Endothelial cell of umbilical vein (primary cell): ENCODE measurements at regions of chr1 and their contacts with region 1.

Region 1: DNA sequence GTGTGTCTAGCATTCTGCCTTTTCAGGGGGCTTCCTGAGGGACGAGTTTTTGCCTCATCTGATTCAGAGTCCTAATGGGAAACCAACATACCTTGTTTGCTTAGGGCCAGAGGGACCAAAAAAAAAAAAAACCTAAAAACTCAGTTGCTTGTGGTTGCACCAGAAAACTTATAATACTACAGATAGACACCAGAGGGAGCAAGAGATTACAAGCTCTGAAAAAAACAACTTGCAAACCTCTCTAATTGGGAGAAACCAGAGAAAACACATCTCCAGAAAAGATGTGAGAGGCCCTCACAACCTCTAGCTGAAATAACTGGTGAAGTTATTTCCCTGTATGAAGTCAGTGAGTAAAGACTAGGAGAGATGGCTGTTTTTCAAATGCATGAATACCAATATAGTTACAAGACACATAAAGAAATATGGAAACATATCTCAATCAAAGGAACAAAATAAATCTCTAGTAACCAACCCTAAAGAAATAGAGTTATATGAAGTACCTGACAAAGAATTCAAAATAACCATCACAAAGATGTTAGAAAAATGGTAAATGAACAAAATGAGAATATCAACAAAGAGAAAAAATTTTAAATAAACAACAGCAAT is 233.7 kb upstream of the NFIA start:
- DNase-seq: peak; percentile 79
- H3K4me3 ChIP-seq: no peak overlapping the region
- H3K27ac ChIP-seq: no peak overlapping the region
- H3K4me1 ChIP-seq: no peaks in the 10 kb centered on the region
- H3K27me3 ChIP-seq: no peaks in the 10 kb centered on the region
- CTCF ChIP-seq: peak; percentile 35 to 45
- POLR2A ChIP-seq: no peak

Region 2: GRCh38 chr1:59971464-59971911 is 877.2 kb before region 1 on chr1:
- CTCF ChIA-PET with region 1: interaction called, 18 read pairs
- POLR2A ChIA-PET with region 1: no interaction called
- dilution Hi-C with region 1: no loop called
- intact Hi-C with region 1: loop called (anchors 2 kb)
- DNase-seq: peak; percentile 63
- H3K4me3 ChIP-seq: no peak overlapping the region
- H3K27ac ChIP-seq: no peak overlapping the region
- H3K4me1 ChIP-seq: peaks cover 2% of the 10 kb centered on the region
- H3K27me3 ChIP-seq: peaks cover 0 to 11% of the 10 kb centered on the region in 2 experiments
- CTCF ChIP-seq: peak; percentile 83 to 91
- POLR2A ChIP-seq: no peak

Region 3: GRCh38 chr1:60153961-60154360 is 694.7 kb before region 1 on chr1:
- CTCF ChIA-PET with region 1: interaction called, 4 read pairs
- POLR2A ChIA-PET with region 1: no interaction called
- dilution Hi-C with region 1: no loop called
- intact Hi-C with region 1: loop called (anchors 2 kb)
- DNase-seq: no peak
- H3K4me3 ChIP-seq: no peak overlapping the region
- H3K27ac ChIP-seq: no peak overlapping the region
- H3K4me1 ChIP-seq: no peaks in the 10 kb centered on the region
- H3K27me3 ChIP-seq: no peaks in the 10 kb centered on the region
- CTCF ChIP-seq: no peak
- POLR2A ChIP-seq: no peak

Region 4: GRCh38 chr1:60911966-60912697 is 63.4 kb after region 1 on chr1:
- CTCF ChIA-PET with region 1: interaction called, 13 read pairs
- POLR2A ChIA-PET with region 1: no interaction called
- dilution Hi-C with region 1: no loop called
- intact Hi-C with region 1: no loop called
- DNase-seq: peak; percentile 62
- H3K4me3 ChIP-seq: no peak overlapping the region
- H3K27ac ChIP-seq: peak overlapping the region; percentile 27
- H3K4me1 ChIP-seq: peaks cover 13% of the 10 kb centered on the region
- H3K27me3 ChIP-seq: no peaks in the 10 kb centered on the region
- CTCF ChIP-seq: no peak
- POLR2A ChIP-seq: no peak

Region 5: DNA sequence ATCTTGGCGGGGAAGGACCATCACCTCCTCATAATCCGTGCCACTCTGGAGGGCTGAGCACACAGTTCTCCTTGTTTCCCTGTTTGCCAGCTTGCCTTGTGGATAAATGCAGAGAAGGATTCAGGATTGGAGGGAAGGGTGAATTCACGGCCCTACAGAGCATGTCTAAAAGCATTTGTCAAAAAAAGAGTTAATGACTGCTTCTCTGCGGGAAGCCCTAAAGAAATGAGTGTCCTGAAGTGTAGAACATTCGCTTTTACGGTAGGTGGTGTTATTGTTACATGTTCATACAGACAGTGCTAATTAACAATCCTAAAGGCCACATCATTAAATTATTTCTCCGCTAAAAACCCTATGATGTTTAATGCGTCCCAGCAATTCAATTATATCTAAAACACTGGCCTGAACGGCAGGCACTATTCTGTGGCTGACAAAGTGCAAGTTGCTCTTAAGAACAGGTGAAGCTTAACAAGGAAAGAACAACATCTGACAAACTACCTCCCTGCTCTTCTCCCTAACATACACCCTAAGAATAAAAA is 121.4 kb after region 1 on chr1:
- CTCF ChIA-PET with region 1: interaction called, 10 read pairs
- POLR2A ChIA-PET with region 1: no interaction called
- dilution Hi-C with region 1: no loop called
- intact Hi-C with region 1: no loop called
- DNase-seq: peak; percentile 57
- H3K4me3 ChIP-seq: no peak overlapping the region
- H3K27ac ChIP-seq: no peak overlapping the region
- H3K4me1 ChIP-seq: peaks cover 5% of the 10 kb centered on the region
- H3K27me3 ChIP-seq: no peaks in the 10 kb centered on the region
- CTCF ChIP-seq: peak in 1 of 2 donors; percentile 21
- POLR2A ChIP-seq: no peak

Region 6: DNA sequence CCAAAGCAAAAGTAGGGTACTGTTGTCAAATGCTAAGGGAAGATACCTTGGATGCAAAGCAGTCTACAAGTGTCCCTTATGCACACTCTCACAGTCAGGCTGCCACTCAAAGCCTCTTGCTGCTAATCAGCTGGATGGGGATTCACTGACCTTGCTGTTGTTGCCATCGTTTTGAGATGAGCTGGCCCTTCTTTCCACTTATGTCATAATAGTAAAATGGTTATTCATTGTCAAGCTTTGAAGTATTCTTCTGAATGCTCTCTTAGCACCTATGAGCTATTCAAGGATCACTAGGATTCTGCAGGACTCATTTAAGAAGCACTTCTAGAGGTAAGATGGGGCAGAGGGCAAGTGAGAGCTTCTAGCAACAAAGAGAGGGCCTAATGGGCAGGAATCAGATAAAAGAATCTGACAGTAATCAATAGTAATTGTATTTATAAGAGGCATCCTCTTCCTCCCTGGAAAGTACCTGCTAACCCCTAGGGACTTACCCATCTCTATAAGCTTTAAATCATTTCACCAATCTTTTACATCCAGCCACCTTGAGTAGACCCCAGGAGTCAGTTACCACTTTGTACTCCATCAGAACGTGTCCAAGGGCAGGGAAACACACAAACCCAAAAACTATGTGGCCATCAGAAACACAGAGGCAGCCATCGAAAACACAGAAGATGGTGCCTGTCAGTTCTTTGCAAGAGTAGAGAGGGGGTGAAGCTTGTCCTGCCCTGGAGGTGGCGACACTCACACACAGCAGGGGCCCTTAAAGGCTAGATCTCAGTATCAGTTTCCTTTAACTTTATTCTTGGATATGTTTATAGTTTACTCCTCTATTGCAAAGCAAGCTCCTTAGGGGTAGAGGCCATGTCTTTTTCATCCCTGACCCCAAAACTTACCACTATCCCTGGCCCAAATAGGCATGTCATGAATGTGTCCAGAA is 130.0 kb after region 1 on chr1:
- CTCF ChIA-PET with region 1: interaction called, 42 read pairs
- POLR2A ChIA-PET with region 1: no interaction called
- dilution Hi-C with region 1: no loop called
- intact Hi-C with region 1: no loop called
- DNase-seq: peak; percentile 69
- H3K4me3 ChIP-seq: no peak overlapping the region
- H3K27ac ChIP-seq: no peak overlapping the region
- H3K4me1 ChIP-seq: peaks cover 6% of the 10 kb centered on the region
- H3K27me3 ChIP-seq: no peaks in the 10 kb centered on the region
- CTCF ChIP-seq: peak; percentile 60 to 77
- POLR2A ChIP-seq: no peak

Region 7: DNA sequence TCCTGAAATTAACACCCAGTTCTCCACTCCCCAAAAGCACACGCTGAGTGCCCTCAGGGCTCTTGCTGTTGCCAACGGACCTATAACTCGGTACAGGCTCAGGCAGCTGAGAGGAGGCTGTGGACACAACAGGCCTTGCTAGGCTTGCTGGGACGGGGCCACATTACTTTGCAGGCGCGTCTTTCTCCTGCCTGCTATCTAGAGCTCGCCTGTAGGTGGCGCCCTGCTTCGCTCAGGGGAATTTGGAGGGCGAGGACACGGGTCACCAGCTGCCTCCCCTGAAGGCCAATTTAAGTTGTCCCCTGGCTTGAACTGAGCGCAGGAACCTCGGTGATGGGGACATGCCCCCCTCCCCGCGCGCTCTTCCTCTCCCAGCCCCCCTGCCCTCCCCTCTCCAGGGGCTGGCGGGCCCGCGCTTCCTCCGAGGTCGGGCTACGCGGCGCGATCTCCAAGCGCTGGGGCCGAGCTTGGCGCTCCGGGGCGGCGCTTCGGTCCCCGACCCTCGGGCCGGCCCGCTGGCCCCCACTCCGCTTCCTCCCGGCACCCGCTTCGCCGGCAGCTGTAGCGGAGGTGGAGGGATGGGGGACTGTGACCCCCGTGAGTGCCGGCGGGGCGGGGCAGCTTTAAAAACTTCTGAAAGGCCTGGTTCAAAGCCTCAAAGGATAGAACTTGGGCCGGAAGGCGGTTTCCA is 201.3 kb after region 1 on chr1:
- CTCF ChIA-PET with region 1: interaction called, 16 read pairs
- POLR2A ChIA-PET with region 1: no interaction called
- dilution Hi-C with region 1: no loop called
- intact Hi-C with region 1: no loop called
- DNase-seq: peak; percentile 93
- H3K4me3 ChIP-seq: peak overlapping the region; percentile 62 to 95 (median 92)
- H3K27ac ChIP-seq: peak overlapping the region; percentile 84
- H3K4me1 ChIP-seq: peaks cover 16% of the 10 kb centered on the region
- H3K27me3 ChIP-seq: no peaks in the 10 kb centered on the region
- CTCF ChIP-seq: peak; percentile 89 to 96
- POLR2A ChIP-seq: peak; percentile 40